Lower leg skin (tissue), 4 donors: ENCODE measurements at regions of chr10 and their contacts with region 1.

Region 1: DNA sequence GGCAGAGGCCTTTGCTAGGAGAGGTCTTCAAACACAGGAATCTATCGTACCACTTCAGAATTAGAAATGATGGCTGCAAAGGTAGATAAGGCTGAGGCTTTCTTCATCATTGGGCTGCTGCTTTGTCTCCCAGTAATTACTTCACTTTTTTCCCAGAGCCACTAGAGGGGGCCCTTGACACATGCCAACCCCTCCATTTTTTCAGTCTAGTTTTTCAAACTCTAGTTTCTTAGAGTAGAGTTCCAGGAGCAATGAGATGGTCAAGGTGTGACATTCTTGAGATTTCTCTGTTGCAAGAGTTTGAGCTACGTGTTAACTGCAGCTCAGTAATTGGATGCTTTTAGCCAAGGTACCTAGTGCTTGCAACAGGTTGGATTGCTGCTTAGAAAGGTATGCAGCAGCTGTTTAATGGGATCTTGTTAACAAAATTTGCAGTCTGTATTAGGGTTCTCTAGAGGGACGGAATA is 33.8 kb upstream of the RBM20 start:
- DNase-seq: no peak
- H3K4me3 ChIP-seq: no peak overlapping the region
- CTCF ChIP-seq: no peak
- POLR2A ChIP-seq: no peak

Region 2: GRCh38 chr10:110221721-110222261 is 388.6 kb before region 1 on chr10:
- intact Hi-C with region 1: no loop called
- DNase-seq: peak; percentile 69 to 93
- H3K4me3 ChIP-seq: no peak overlapping the region
- CTCF ChIP-seq: no peak
- POLR2A ChIP-seq: no peak

Region 3: DNA sequence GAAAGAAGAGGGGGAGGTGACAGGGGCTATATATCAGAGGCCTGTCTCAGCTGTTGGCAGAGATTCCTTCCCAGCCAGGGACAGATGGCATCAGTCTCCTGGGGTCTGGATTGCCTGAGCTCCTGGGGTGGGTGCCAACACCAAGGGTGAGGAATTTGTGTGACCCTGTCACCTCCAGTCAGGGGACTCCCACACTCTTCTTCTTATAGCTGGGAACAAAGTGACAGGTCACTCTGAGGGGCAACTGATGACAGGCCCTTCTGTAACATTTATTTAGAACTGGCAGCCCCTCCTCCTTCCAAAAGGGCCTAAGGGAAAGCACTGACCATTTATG is 166.4 kb before region 1 on chr10:
- intact Hi-C with region 1: no loop called
- DNase-seq: no peak
- H3K4me3 ChIP-seq: no peak overlapping the region
- CTCF ChIP-seq: no peak
- POLR2A ChIP-seq: no peak

Region 4: DNA sequence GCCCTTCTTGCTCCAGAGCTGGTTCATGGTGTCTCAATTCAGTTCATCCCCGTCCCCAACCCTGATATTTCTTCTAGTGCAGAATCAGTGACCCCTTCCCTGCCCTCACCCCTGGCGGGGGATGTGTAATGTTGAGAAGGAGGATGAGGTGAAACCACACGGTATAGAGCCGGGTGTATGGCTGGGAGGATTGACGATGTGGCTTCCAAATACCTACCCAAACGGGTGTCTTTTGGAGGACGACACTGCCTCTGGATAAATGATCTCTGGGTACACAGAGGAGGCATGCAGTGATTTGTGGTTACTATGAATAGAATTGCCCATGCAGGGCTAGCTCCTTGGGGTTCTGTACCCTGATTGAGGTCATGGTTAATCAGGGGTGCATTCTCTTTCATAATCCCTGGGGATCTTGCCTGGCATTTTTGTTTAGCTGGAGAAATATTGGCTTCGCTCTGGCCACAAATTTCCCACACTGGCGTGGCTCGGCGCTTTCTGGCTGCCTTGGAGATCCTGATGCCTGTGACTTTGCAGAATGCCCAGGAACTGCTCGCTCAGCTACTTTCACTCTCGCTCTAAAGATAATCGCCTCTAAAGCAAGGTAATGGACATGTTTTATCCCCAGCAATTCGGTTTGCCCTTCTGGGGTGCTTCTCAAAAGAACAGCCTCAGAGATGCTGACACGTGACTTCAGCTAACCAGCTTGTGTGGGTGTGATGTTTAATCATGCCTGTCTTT is 123.0 kb after region 1 on chr10:
- intact Hi-C with region 1: loop called (anchors 10 kb)
- DNase-seq: no peak
- H3K4me3 ChIP-seq: no peak overlapping the region
- CTCF ChIP-seq: no peak
- POLR2A ChIP-seq: no peak

Region 5: GRCh38 chr10:110993024-110993693 is 382.8 kb after region 1 on chr10:
- intact Hi-C with region 1: no loop called
- DNase-seq: no peak
- H3K4me3 ChIP-seq: no peak overlapping the region
- CTCF ChIP-seq: no peak
- POLR2A ChIP-seq: no peak